Endothelial cell of umbilical vein (primary cell): ENCODE measurements at regions of chr9 and their contacts with region 1.

Region 1: DNA sequence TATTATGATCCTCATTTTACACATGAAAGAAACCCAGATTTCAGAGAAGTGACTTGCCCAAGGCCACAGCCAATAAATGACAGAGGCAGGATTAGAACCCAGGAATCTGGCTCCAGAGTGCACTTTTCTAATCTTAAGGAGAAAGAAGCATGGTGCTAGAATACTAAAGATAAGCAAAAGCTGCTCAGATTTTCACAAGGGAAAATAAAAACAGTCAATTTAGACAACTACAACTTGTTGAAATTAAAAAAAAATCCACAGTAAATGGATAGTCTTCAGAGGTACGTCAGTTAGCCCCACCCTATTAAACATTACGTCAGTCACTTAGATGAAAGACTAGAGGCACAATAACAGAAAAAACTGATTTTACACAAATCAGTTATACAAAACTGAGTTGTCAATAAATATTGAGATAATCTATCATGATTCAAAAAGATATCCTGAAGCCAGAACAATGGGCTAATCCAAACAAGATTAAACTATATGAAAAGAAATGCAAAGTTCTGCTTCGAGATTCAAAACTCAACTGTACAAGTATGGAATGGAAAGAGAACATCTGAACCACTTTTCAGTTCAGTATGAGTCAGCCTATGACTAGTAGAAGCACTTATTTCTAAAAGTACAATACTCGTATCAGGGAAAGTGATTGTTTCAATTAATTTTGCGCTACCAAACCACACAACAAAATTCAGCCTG is 9.3 kb downstream of the TMEM245 start:
- DNase-seq: peak; percentile 89
- H3K4me3 ChIP-seq: peak overlapping the region in 1 of 3 experiments; percentile 46
- H3K27ac ChIP-seq: peak overlapping the region; percentile 77
- H3K4me1 ChIP-seq: peaks cover 52% of the 10 kb centered on the region
- H3K27me3 ChIP-seq: no peaks in the 10 kb centered on the region
- CTCF ChIP-seq: no peak
- POLR2A ChIP-seq: no peak

Region 2: DNA sequence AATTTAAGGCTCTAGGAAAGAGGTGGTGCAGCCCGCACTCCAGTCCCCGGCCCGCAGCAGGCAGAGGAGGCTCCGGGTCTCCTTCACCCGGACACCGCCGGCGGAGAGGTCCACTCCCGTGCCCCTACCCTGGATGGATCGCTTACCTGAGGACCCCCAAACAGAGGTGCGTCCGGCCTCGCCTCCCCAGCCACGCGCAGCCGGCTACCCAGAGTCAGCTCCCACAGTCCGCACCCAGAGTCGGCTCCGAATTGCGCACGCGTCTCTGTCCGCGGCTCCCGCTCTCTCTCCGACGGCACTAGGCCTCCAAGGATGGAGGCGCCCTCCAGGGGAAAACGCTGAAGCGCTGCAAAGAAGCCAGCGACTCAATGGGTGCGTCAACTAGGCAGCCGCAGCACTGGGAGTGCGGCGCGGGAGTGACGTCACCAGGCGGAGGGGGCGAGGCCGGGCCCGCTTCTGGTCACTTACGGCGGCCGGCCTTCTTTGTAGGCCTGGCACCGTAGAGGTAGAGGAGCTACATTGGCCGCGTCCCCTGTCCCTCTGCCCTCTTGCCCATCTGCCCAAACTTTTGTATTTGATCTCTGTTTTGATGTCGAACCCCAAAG is 176.7 kb before region 1 on chr9 and contains the start of gene ELP1:
- CTCF ChIA-PET with region 1: no interaction called
- POLR2A ChIA-PET with region 1: no interaction called
- dilution Hi-C with region 1: no loop called
- intact Hi-C with region 1: loop called (anchors 5 kb)
- DNase-seq: peak; percentile 94
- H3K4me3 ChIP-seq: peak within 1 kb of the TSS; percentile 11 to 74 (median 66)
- H3K27ac ChIP-seq: peak within 1 kb of the TSS; percentile 47
- H3K4me1 ChIP-seq: peaks cover 10% of the 10 kb centered on the region
- H3K27me3 ChIP-seq: no peaks in the 10 kb centered on the region
- CTCF ChIP-seq: peak; percentile 12 to 46
- POLR2A ChIP-seq: no peak
- total RNA-seq, gene ELP1: 21.4 and 21.8 TPM in 2 replicates

Region 3: DNA sequence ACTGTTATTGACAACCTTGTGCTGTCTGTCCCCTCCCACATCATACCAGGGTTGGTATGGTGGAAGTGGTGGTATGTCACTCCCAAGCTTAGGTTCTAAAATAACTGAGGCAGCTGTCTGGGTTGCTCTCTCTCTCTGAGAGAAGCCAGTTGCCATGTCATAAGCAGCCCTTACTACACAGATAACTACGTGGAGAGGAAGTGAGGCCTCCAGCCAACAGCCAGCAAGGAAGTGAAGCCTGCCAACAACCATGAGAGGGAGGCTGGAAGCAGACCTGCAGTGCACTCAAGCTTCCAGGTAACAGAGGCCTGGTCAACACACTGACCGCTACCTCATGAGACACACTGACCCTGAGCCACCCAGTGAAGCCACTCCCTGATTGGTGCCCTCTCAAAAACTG is 115.8 kb before region 1 on chr9:
- CTCF ChIA-PET with region 1: no interaction called
- POLR2A ChIA-PET with region 1: no interaction called
- dilution Hi-C with region 1: no loop called
- intact Hi-C with region 1: loop called (anchors 5 kb)
- DNase-seq: peak; percentile 95
- H3K4me3 ChIP-seq: no peak overlapping the region
- H3K27ac ChIP-seq: peak overlapping the region; percentile 49
- H3K4me1 ChIP-seq: peaks cover 50% of the 10 kb centered on the region
- H3K27me3 ChIP-seq: no peaks in the 10 kb centered on the region
- CTCF ChIP-seq: no peak
- POLR2A ChIP-seq: no peak

Region 4: GRCh38 chr9:109035684-109036423 is 74.6 kb before region 1 on chr9:
- CTCF ChIA-PET with region 1: no interaction called
- POLR2A ChIA-PET with region 1: no interaction called
- dilution Hi-C with region 1: no loop called
- intact Hi-C with region 1: loop called (anchors 2 kb)
- DNase-seq: peak; percentile 94
- H3K4me3 ChIP-seq: no peak overlapping the region
- H3K27ac ChIP-seq: peak overlapping the region; percentile 84
- H3K4me1 ChIP-seq: peaks cover 42% of the 10 kb centered on the region
- H3K27me3 ChIP-seq: no peaks in the 10 kb centered on the region
- CTCF ChIP-seq: no peak
- POLR2A ChIP-seq: no peak

Region 5: GRCh38 chr9:109098171-109098959 is 12.1 kb before region 1 on chr9:
- CTCF ChIA-PET with region 1: interaction called, 13 read pairs
- POLR2A ChIA-PET with region 1: interaction called, 3 read pairs
- dilution Hi-C with region 1: no loop called
- intact Hi-C with region 1: loop called (anchors 1 kb)
- DNase-seq: peak; percentile 97
- H3K4me3 ChIP-seq: peak overlapping the region in 1 of 3 experiments; percentile 21
- H3K27ac ChIP-seq: peak overlapping the region; percentile 52
- H3K4me1 ChIP-seq: peaks cover 54% of the 10 kb centered on the region
- H3K27me3 ChIP-seq: no peaks in the 10 kb centered on the region
- CTCF ChIP-seq: peak; percentile 19 to 33
- POLR2A ChIP-seq: no peak